GM13976 (cell line): ENCODE measurements at regions of chr4 and their contacts with region 1.

Region 1: DNA sequence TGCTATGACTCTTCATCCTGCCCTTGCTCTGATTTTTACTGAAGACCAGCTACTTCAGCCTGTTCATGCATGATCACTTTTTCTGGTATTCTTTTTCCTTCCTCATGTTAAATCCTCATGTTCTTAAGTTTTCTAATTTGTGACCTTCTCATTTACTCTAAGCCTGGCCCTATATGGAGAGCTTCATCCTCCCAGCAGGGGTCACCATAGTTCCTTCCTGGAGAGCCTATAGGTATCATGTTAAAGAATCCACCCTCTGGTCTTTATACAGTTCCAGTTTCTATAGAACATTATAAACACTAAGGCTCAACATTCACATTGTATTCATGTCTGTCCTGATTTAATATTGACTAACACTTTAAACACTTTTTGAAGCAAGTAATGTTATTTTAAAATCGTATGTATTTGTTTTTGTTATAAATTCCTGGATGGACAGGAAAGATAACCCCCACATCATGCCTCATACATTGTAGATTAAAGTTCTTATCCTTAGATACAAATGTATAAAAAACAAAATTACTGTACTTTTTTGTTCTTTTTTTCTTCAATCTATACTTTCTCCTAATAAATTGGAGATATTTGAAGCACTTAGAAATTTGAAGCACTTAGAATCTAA is 53.8 kb upstream of the OTUD4 start:
- DNase-seq: peak; percentile 74
- CTCF ChIP-seq: peak; percentile 69

Region 2: GRCh38 chr4:145320294-145320693 is 86.1 kb after region 1 on chr4:
- in situ Hi-C with region 1: no loop called
- DNase-seq: no peak
- CTCF ChIP-seq: no peak

Region 3: GRCh38 chr4:145557720-145558119 is 323.5 kb after region 1 on chr4:
- in situ Hi-C with region 1: loop called (anchors 25 kb)
- DNase-seq: peak; percentile 57
- CTCF ChIP-seq: peak; percentile 71

Region 4: DNA sequence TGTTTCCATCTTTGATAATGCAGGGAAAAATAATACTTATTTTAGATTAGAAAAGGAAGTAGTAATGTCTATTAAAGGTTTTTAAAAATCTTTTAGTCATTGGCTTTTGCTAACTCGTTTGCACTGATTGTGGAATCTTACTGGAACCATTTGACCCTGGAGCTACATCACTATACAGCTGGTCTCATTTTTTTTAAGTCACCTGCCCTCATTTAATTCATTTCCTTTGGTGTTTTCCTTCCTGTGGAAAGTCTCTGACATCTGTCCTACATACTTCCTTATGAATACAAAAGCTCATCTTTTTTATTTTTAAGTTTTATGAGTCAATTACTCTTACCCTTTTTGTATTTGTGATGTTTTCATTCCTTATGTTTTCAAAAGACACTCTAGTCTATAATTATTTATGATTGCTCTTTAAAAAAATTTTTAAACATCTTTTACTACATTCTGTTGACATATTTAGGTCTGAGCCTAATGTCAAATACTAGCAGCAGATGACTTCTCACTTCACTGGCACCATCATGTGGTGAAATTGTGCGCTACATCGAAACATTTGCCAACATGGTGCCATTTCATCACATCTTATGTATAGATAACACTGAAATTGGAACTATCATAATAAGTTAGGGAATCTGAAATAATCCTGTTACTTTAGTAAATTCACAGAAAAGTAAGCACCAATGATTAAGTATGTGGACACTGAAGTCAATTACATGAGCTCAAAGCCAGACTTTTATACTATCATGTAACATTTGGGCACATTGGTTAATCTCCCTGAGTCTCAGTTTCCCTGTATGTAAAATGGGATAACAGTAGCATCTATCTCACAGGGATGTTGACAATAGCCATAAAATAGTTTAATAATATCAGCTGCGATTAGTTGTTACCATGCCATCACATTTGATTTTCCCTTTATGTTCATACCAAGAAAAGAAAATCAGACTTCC is 375.6 kb after region 1 on chr4:
- in situ Hi-C with region 1: loop called (anchors 10 kb)
- DNase-seq: peak; percentile 49
- CTCF ChIP-seq: peak; percentile 64